AG04449 (cell line): ENCODE measurements at regions of chr3 and their contacts with region 1.

Region 1: DNA sequence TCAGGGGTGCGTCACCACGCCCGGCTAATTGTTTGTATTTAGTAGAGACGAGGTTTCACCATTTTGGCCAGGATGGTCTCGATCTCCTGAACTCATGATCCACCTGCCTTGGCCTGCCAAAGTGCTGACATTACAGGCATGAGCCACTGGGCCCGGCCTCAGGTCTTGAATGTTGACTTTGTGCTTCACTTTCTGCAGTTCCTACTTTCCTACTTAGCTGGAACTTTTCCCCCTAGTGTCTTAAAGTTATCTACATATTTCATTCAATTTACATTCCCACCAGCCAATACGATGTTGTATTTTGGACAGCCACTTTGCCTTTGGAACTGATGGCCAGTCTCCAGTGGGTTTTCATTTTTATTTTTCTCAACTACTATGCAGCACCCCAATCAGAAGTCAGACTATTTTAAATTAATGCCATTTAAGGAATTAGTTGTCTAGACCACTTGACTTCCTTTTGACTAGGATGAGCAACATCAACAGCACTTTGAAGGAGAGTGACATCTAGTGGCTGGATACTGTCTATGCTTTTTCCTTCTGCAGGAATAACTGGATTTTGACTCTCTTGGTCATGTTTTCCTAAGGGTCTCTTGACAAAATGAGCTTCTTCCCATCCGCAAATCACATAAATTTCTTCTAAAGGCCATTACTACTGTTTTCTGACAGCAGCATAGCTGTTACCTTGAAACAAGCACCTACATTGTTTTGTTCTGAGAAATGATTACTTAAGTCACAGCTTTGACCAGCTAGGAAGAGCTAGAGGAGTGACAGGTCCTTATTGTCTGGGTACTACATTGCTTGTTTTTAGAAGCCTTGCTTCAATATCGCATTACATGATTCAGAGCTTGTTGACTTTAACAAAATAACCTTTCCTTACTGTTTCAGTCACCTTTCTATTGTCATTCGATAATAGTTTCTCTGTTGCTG is 140.2 kb downstream of the ITPR1 start:
- DNase-seq: peak; percentile 31
- H3K4me3 ChIP-seq: no peak overlapping the region
- CTCF ChIP-seq: peak; percentile 81

Region 2: GRCh38 chr3:4314688-4315087 is 318.7 kb before region 1 on chr3:
- CTCF ChIA-PET with region 1: interaction called, 23 read pairs
- POLR2A ChIA-PET with region 1: no interaction called
- DNase-seq: no peak
- H3K4me3 ChIP-seq: no peak overlapping the region
- CTCF ChIP-seq: no peak

Region 3: DNA sequence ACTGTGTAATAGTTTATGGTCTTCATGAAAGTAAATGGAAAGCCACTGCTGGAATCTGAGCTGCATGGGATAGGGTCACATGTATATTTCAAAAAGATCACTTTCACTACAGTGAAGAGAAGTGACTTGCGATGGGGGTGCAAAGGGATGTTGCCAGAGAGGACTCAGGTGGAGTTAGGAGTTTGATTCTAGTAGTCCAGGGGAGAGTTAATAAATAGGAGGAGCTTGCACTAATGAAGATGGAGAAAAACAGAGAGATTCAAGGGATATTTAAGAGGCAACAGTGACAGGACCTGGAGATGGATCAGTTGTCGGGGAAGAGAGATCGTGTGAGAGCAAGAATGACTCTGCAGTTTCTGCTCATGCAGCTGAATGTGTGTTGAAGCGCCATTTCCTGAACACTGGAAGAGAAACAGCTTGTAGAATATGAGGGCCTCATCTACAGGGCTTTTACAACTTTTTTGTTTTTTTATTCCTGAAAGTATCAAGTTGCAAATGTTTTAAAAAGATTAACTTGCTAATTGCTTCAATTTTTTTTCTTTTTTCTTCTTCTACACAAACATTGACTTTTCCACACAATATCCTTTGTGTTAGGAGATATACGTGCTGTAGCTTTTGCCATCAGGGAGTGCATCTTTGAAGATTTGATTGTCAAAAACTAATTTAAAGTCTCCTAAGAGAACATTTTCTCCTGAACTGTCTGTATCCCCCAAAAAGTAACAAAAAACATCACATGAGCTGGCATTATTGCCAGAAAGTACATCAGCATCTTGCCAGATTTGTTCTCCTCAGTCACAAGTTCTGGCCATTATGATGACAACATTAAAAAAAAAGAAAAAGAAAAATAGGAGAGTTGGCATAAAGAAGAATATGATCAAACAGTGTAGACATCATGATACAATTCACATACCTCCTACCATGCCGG is 292.7 kb before region 1 on chr3:
- CTCF ChIA-PET with region 1: interaction called, 46 read pairs
- POLR2A ChIA-PET with region 1: no interaction called
- DNase-seq: no peak
- H3K4me3 ChIP-seq: no peak overlapping the region
- CTCF ChIP-seq: no peak

Region 4: DNA sequence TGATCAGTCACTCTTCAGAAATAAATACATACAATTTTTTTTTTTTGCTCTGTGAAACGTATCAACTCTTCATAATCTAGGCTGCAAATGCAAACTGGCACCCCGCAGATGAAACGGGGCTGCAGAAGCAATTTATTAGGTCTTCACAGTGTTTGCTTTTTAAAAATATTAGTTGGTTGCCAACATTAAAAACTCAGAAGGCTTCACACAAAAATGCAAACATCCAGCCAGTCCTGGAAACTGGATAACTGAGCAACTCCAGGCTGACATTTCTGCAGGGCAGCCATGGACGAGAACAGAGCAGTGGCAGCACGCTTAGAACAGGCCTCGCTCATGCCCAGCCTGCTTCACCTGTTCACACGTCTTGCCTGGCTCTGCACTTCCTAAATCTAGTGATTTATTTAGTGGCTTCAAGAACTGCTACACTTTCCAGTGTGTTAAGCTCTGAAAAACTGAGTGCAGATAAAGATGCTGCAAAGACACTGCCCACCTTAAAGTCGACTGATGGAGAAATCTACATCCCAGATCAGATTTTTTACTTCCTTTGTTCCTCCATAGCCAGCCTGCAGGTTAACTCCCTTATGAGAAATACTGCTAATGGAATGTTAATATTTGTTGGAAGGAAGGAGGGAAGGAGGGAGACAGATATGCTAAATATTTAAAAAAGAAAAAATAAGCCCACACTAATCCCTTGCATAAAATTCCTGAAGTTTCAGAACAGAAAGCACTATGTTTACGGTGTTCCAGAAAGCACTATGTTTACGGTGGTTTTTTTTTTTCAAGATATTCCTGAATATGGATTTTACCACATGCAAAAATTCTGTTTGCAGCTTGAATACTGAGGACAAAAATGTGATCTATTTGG is 276.6 kb before region 1 on chr3:
- CTCF ChIA-PET with region 1: interaction called, 241 read pairs
- POLR2A ChIA-PET with region 1: no interaction called
- DNase-seq: no peak
- H3K4me3 ChIP-seq: no peak overlapping the region
- CTCF ChIP-seq: no peak

Region 5: DNA sequence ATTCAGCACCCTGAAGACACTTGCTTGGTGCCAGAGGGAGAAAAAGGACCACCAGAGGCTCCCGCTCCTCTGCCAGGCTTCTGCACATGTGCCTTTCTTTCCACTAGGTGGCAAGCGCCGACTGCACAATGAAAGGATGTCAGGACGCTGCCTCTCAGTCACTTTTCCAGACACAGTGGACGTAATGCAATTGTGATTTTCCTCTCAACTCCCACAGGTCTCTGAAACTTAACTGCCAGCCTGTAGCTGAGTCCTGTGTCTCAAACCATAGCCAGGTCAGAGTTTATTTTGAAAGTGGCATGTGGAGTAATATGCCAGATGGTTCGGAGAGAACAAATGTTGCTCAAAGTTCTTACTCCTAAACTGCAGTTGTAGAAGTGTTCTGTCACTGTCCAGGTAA is 22.7 kb after region 1 on chr3:
- CTCF ChIA-PET with region 1: interaction called, 13 read pairs
- POLR2A ChIA-PET with region 1: no interaction called
- DNase-seq: no peak
- H3K4me3 ChIP-seq: no peak overlapping the region
- CTCF ChIP-seq: peak; percentile 94